ENCODE measurements at regions of chr19 and their contacts with region 1.

Region 1: DNA sequence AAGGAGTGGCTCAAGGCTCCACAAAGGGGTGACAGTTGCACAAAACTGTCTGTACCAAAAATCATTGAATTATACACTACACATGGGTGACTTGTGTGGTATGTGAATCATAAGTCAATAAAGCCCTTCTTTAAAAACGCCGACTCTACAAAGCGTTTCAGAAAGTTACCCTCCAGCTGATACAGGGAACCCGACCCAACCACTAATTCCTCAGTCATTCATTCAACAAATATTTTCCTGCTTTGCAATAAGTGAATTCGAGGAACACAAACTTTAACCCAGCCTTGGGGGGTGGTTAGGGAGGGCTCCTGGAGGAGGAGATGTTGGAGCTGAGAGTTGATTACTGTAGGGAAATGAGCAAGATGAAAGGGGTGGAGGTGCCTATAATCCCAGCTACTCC is 32.0 kb downstream of the LTBP4 start:
- DNase-seq: no peak
- H3K4me3 Mint-ChIP-seq: no peak overlapping the region
- H3K27ac Mint-ChIP-seq: no peak overlapping the region
- H3K4me1 Mint-ChIP-seq: peaks cover 17% of the 10 kb centered on the region
- H3K27me3 Mint-ChIP-seq: peaks cover 41% of the 10 kb centered on the region

Region 2: GRCh38 chr19:40603389-40604135 is 29.6 kb before region 1 on chr19:
- CTCF ChIA-PET with region 1: interaction called, 72 read pairs
- DNase-seq: peak; percentile 100
- H3K4me3 Mint-ChIP-seq: peak overlapping the region; percentile 85
- H3K27ac Mint-ChIP-seq: peak overlapping the region; percentile 90
- H3K4me1 Mint-ChIP-seq: peaks cover 90% of the 10 kb centered on the region
- H3K27me3 Mint-ChIP-seq: peaks cover 56% of the 10 kb centered on the region

Region 3: DNA sequence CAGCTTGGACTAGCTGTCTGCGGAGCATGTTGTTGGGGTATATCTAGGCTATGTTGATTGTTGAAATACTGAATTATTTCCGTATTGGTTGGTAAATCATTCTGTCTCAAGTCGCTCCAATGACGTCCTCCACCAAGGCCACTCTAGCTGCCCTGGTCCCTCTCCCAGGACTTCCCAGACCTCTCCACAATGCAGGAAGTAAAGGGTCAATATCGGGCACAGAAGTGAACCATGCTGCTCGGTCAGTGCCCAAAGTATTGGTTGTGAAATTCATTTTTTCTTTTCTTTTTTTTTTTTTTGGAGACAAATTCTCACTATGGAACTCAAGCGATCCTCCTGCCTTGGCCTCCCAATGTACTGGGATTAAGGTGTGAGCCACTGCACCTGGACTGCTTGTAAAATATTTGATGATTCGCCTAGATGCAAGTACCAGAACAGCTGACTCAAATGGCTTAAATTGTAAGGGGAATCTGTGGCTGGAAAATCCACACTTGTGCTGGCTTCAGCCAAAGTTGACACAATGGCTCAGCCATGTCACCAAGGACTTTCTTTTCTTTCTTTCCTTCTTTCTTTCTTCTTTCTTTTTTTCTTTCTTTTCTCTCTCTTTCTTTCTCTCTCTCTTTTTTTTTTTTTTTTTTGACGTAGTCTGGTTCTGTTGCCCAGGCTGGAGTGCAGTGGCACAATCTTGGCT is 13.5 kb after region 1 on chr19:
- CTCF ChIA-PET with region 1: interaction called, 37 read pairs
- DNase-seq: no peak
- H3K4me3 Mint-ChIP-seq: no peak overlapping the region
- H3K27ac Mint-ChIP-seq: no peak overlapping the region
- H3K4me1 Mint-ChIP-seq: peaks cover 5% of the 10 kb centered on the region
- H3K27me3 Mint-ChIP-seq: peaks cover 26% of the 10 kb centered on the region

Measured in activated naive CD4-positive, alpha-beta T cell treated with anti-CD3 and anti-CD28 coated beads, Interleukin-2, amount 10 ng/mL, durations not matched to agents 7 days and 5 days (primary cell).